AG04449 (cell line): ENCODE measurements at regions of chr2 and their contacts with region 1.

Region 1: DNA sequence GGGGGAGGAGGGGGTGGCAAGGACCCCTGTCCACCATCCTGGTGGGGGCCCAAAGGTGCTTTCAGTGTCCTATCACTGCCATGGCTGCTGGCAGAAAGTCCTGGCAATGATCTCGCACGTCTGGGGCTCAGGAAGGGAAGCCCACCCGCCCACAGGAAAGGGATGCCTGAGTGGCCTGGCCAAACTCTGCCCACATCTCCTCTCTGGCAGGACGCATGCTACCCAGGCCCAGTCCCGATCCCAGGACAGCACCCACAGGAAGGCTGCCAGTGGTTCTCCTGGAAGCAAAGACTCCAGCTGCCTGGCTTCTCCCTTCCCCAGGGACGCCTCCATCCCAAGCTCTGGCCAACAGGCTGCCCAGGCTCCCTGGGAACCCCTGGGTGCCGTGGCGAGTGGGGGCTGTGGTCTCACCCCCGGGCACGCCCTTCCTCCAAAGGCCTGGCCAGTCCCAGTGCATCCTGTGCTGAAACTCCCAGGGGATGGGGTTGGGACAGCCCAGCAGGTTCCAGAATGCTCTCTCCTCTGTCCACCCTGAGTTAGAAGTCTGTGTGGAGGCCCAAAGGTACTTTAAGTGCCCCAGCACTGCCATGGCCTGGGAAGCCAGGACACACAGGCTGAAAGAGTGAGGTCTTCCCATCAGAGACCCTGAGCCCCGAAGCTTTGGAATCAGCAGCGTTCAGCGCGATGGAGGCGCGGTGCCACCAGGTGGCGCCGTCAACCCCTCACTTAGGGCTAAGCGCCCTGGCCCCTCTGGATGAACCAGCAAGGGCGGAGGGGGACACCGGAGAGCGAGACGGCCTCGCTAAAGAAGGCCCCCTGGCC is 29.8 kb upstream of the TAF1B start:
- DNase-seq: no peak
- H3K4me3 ChIP-seq: no peak overlapping the region
- CTCF ChIP-seq: peak; percentile 97

Region 2: GRCh38 chr2:9703085-9703641 is 110.4 kb before region 1 on chr2:
- CTCF ChIA-PET with region 1: no interaction called
- POLR2A ChIA-PET with region 1: no interaction called
- DNase-seq: peak; percentile 44
- H3K4me3 ChIP-seq: no peak overlapping the region
- CTCF ChIP-seq: no peak

Region 3: GRCh38 chr2:9789371-9789968 is 24.1 kb before region 1 on chr2:
- CTCF ChIA-PET with region 1: no interaction called
- POLR2A ChIA-PET with region 1: no interaction called
- DNase-seq: no peak
- H3K4me3 ChIP-seq: no peak overlapping the region
- CTCF ChIP-seq: no peak

Region 4: DNA sequence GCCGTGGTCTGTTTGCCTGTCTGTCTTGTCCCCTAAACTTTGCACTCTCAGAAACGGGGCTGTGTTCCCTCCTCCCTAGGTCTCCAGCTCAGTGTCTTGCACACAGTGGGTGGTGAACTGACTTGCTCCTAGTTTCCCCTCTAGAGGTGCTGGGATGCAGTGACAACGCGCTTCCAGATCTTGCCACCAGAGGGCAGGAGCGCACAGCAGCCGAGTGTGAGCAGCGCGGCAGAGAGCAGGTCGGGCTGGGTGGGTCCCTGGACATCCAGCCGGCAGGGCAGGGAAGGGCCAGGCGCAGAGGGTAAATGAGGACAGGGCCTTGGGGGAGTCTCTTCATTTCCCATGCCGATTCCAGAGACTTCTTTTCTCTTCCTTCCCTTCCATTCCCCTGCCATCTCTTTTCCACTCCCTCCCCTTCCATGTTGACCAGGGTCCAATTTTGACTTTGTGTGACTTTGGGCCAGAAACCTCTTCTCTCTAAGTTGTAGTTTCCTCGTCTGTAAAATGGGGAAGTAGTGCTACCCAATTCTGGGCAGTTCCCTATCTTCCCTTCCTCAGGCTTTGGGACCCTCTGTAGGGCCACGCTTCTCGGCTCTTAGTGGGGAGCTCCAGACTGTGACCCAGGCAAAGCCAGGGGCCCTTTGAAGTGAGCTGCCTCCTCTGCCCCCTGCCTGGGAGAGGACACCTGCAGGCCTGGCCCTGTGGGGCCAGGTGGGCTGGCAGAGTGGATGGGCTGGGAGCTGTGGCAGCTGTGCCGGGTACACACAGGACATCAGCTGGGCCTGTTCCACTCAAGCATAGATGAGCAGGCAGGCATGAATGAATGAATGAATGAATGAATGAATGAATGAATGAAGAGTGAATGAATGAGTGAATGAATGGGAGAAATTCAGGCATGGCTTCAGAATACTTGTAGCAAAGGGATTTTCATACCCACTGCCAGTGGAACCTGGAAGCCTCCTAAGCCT is 13.6 kb before region 1 on chr2:
- CTCF ChIA-PET with region 1: interaction called, 163 read pairs
- POLR2A ChIA-PET with region 1: no interaction called
- DNase-seq: no peak
- H3K4me3 ChIP-seq: no peak overlapping the region
- CTCF ChIP-seq: peak; percentile 100

Region 5: DNA sequence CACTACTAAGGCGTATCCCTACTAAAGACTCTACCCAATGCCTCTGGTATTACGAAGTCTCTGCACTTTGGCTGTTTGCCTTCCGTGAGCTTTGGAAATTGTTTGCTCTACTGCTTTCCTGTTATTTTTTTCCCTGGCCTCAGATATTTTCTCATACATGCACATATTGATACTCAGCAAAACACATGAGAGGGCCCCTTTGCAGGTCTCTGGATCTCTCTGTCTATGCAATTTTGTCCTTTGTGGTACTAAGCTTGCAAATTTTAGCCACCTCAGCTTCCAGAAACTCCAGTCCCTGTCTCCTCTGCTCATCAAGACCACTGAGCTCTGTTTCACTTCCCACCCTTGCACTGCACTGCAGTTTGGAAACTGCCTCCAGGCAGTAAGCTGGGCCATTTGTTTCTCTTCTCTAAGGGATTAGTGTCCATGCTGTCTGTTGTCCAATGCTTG is 76.3 kb after region 1 on chr2:
- CTCF ChIA-PET with region 1: interaction called, 20 read pairs
- POLR2A ChIA-PET with region 1: no interaction called
- DNase-seq: no peak
- H3K4me3 ChIP-seq: no peak overlapping the region
- CTCF ChIP-seq: no peak

Region 6: DNA sequence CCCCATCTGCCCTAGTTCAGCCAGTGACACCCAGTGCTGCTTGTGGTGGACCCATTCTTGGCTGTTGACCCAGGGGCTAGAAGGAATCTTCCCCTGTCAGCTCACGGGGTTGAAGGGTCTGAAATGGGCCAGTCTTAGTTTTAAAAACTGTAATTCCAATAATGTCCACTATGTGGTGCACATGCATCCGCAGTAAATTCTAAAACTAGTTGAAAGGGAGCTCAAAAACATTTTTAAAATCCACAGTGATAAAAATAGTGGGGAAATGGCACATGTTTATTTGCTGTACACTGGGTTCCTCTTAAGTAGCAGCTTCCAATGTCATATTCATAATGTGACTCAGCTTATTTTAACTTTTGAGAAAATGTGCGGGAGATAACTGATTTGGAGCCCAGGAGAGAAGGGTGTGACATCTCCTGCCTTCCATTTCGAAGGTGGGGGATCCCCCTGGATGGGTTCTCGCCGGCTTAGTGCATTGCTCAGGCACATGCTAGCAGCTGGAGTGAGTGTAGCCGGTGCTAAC is 170.8 kb after region 1 on chr2:
- CTCF ChIA-PET with region 1: interaction called, 61 read pairs
- POLR2A ChIA-PET with region 1: no interaction called
- DNase-seq: no peak
- H3K4me3 ChIP-seq: no peak overlapping the region
- CTCF ChIP-seq: peak; percentile 19

Region 7: GRCh38 chr2:10036095-10036884 is 222.8 kb after region 1 on chr2:
- CTCF ChIA-PET with region 1: interaction called, 38 read pairs
- POLR2A ChIA-PET with region 1: no interaction called
- DNase-seq: peak; percentile 31
- H3K4me3 ChIP-seq: no peak overlapping the region
- CTCF ChIP-seq: peak; percentile 61

Region 8: GRCh38 chr2:10072656-10073480 is 259.3 kb after region 1 on chr2:
- CTCF ChIA-PET with region 1: interaction called, 13 read pairs
- POLR2A ChIA-PET with region 1: no interaction called
- DNase-seq: peak; percentile 36
- H3K4me3 ChIP-seq: no peak overlapping the region
- CTCF ChIP-seq: peak; percentile 84